BJ (cell line): ENCODE measurements at regions of chr3 and their contacts with region 1.

Region 1: DNA sequence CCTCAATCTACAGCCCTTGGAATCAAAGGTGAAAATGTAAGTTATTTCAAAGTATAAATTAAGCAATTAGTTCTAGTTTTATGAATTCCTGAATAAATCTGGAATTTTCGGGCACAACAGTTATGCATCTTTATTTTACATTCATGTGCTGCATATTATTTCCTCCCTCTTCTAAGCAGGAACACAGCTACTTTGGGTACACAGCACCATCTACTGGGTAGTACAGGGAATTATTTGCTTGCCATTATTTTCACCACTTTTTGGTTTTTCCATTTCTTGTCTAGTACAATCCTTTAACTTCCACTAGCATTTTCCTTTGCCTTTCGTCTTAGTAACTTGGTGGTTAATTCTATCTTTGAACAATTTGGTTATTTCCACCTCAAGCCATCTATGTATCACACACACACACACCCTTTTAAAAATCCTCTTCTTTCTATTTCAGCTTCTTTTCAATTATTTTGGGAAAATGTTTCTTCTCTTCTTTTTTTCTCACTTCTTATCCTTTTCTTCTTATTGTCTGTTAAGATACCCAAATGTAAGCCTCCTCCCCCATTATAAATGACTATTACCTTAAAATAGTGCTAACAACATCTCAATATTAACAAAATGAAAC is 451.0 kb downstream of the MFSD1 start:
- DNase-seq: no peak
- H3K4me3 ChIP-seq: no peak overlapping the region
- H3K27me3 ChIP-seq: no peaks in the 10 kb centered on the region
- CTCF ChIP-seq: peak; percentile 65

Region 2: DNA sequence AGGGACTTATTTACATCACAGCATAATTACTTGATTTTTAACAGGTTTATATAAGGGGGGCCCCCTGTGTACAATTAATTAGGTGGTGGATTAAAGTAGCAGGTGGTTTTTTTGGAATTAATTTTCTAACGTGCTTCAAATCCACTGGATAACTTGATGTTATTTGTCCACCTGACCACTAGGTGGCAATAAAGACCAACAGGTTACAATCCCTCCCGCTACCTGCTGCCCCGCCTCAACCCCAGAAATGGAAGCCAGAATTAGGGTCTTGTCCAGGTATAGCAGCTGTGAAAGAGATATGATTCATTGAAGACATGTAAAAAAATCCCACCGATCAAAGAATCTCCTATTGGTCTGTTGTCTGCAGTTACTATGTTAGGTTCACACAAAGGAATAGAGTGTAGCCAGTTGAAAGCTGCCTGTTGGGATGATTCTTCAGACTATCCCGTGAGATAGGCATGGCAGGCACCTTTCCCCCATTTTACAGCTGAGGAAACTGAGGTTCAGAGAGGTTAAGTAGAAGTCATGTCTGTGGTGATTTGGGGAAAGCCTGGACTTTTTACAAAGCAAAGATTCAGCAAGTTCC is 407.0 kb before region 1 on chr3:
- CTCF ChIA-PET with region 1: interaction called, 144 read pairs
- POLR2A ChIA-PET with region 1: no interaction called
- DNase-seq: no peak
- H3K4me3 ChIP-seq: no peak overlapping the region
- H3K27me3 ChIP-seq: no peaks in the 10 kb centered on the region
- CTCF ChIP-seq: peak; percentile 67

Region 3: DNA sequence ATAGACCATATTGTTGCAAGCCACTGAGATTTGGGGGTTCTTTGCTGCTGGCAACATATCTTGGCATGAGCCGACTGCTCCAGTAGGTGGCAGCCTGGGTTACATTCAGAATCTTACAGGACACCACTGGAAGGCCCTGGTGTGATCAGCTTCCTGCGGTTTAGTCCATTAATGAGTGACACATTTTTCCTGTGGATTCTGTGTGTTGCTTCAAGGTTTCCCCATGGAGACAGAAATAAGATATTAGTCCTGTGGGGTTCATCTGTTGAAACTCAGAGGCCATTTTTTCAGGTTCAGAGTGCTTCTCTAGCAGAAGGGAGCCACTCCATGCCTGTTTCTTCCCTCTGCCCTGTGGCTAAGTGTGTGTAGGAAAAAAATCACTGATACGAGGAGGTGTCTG is 334.9 kb before region 1 on chr3:
- CTCF ChIA-PET with region 1: interaction called, 67 read pairs
- POLR2A ChIA-PET with region 1: no interaction called
- DNase-seq: peak; percentile 41
- H3K4me3 ChIP-seq: no peak overlapping the region
- H3K27me3 ChIP-seq: no peaks in the 10 kb centered on the region
- CTCF ChIP-seq: peak; percentile 88

Region 4: GRCh38 chr3:159137949-159138348 is 114.9 kb before region 1 on chr3:
- CTCF ChIA-PET with region 1: no interaction called
- POLR2A ChIA-PET with region 1: interaction called, 10 read pairs
- DNase-seq: no peak
- H3K4me3 ChIP-seq: no peak overlapping the region
- H3K27me3 ChIP-seq: no peaks in the 10 kb centered on the region
- CTCF ChIP-seq: no peak

Region 5: DNA sequence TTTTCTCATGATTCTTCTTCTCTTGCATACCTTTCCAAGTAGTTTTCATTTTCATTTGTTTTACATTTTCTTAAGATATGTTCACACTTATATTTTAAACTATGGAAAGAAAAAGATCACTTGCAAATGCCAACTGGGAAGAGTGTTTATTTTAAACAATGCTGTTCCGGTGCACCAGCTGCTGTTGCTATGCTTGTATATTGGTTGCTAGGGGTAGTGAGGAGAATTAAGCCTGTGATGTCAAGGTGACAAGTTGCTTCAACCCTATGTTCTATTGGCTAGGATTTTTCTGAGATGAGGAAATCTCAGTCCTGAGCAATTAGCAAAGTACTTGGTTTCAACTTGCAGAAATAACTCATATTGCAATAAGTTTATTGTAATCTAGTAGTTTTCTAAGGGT is 49.1 kb after region 1 on chr3:
- CTCF ChIA-PET with region 1: no interaction called
- POLR2A ChIA-PET with region 1: no interaction called
- DNase-seq: no peak
- H3K4me3 ChIP-seq: no peak overlapping the region
- H3K27me3 ChIP-seq: peaks cover 3% of the 10 kb centered on the region; the same call in 1 of the 2 replicates
- CTCF ChIP-seq: no peak